Activated B cell treated with CpG ODN at 0.5 μM for 24 hours (primary cell): ENCODE measurements at regions of chr11 and their contacts with region 1.

Region 1: DNA sequence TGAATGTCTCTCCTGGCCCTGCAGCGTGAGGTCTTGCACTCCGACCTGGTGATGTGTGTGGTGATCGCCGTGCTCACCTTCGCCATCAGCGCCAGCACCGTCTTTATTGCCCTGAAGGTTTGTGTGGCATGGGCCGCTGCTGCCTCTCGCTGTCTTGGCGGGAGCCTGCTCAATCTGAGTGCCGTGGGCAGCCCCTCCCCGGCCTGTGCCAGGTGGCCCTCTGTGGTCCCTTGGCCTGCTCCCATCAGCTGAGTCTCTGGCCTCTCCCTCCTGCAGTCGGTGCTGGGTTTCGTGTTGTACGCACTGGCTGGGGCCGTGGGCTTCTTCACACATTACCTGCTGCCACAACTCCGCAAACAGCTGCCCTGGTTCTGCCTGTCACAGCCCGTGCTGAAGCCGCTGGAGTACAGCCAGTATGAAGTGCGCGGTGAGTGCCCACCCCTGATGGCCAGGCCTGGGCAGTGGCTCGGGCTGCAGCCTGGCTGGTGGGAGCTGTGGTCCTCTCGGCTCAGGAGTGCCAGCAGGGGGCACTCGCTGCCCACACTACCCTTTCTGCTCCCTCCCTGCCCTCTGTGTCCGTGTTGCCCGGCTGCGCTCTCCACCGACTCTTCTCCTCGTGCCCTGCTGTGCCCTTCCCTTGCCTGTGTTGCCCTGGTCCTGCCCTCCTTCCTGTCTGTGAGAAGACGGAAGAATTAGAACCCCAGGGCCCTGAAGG is 10.2 kb downstream of the PCNX3 start:
- DNase-seq: peak; percentile 65
- ATAC-seq: peak; percentile 96
- H3K4me3 Mint-ChIP-seq: no peak overlapping the region
- H3K27ac Mint-ChIP-seq: peak overlapping the region; percentile 52
- H3K4me1 Mint-ChIP-seq: peaks cover 8% of the 10 kb centered on the region
- H3K27me3 Mint-ChIP-seq: no peaks in the 10 kb centered on the region
- CTCF ChIP-seq: no peak

Region 2: DNA sequence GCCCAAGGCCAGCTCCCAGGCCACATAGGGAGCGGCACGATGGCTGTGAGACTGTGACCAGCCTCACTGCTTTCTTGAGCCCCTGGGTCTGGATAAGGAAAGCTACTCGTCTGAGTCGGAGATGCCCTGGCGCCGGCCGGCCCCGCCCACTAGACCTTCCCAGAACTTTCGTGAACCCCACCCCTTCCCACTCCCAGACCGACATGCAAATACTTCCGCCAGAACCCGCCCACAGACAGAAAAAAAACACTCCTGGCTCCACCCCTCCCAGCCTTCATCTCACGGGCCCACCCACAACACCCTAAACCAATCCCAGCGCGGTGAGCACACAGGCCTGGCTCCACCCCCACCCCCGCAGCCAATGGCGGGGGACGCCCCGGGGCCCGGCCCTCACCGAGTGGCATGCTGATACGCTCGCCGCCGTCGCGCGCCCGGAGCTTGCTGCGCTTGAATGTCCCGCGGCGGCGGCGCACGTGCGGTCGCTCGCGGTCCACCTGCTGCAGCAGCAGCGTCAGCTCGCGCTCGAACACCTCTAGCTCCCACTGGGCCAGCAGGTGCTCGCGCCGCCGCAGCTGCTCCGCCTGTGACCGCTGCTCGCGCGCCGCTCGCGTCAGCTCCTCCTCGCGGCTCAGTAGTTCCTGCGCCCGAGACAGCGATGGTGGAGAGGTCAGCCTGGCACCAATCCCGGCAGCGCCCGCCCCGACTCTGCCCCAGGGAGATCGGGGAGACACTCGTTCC is 18.7 kb before region 1 on chr11:
- CTCF ChIA-PET with region 1: no interaction called
- POLR2A ChIA-PET with region 1: interaction called, 10 read pairs
- intact Hi-C with region 1: no loop called
- DNase-seq: no peak
- ATAC-seq: peak; percentile 34
- H3K4me3 Mint-ChIP-seq: no peak overlapping the region
- H3K27ac Mint-ChIP-seq: no peak overlapping the region
- H3K4me1 Mint-ChIP-seq: peaks cover 49% of the 10 kb centered on the region
- H3K27me3 Mint-ChIP-seq: no peaks in the 10 kb centered on the region
- CTCF ChIP-seq: no peak

Region 3: GRCh38 chr11:65652511-65653231 is 26.9 kb after region 1 on chr11:
- CTCF ChIA-PET with region 1: interaction called, 12 read pairs
- POLR2A ChIA-PET with region 1: interaction called, 617 read pairs
- intact Hi-C with region 1: no loop called
- DNase-seq: peak; percentile 98
- ATAC-seq: peak; percentile 89
- H3K4me3 Mint-ChIP-seq: peak overlapping the region; percentile 90
- H3K27ac Mint-ChIP-seq: peak overlapping the region; percentile 95
- H3K4me1 Mint-ChIP-seq: peaks cover 44% of the 10 kb centered on the region
- H3K27me3 Mint-ChIP-seq: no peaks in the 10 kb centered on the region
- CTCF ChIP-seq: no peak

Region 4: GRCh38 chr11:65700391-65700790 is 74.6 kb after region 1 on chr11:
- CTCF ChIA-PET with region 1: interaction called, 24 read pairs
- POLR2A ChIA-PET with region 1: no interaction called
- intact Hi-C with region 1: no loop called
- DNase-seq: no peak
- ATAC-seq: peak; percentile 75
- H3K4me3 Mint-ChIP-seq: no peak overlapping the region
- H3K27ac Mint-ChIP-seq: no peak overlapping the region
- H3K4me1 Mint-ChIP-seq: peaks cover 8% of the 10 kb centered on the region
- H3K27me3 Mint-ChIP-seq: no peaks in the 10 kb centered on the region
- CTCF ChIP-seq: no peak

Region 5: GRCh38 chr11:65817835-65818742 is 192.3 kb after region 1 on chr11:
- CTCF ChIA-PET with region 1: interaction called, 3 read pairs
- POLR2A ChIA-PET with region 1: no interaction called
- intact Hi-C with region 1: loop called (anchors 1 kb)
- DNase-seq: peak; percentile 95
- ATAC-seq: peak; percentile 95
- H3K4me3 Mint-ChIP-seq: peak overlapping the region; percentile 77
- H3K27ac Mint-ChIP-seq: peak overlapping the region; percentile 63
- H3K4me1 Mint-ChIP-seq: peaks cover 14% of the 10 kb centered on the region
- H3K27me3 Mint-ChIP-seq: no peaks in the 10 kb centered on the region
- CTCF ChIP-seq: peak; percentile 96